ENCODE measurements at regions of chr7 and their contacts with region 1.

Region 1: DNA sequence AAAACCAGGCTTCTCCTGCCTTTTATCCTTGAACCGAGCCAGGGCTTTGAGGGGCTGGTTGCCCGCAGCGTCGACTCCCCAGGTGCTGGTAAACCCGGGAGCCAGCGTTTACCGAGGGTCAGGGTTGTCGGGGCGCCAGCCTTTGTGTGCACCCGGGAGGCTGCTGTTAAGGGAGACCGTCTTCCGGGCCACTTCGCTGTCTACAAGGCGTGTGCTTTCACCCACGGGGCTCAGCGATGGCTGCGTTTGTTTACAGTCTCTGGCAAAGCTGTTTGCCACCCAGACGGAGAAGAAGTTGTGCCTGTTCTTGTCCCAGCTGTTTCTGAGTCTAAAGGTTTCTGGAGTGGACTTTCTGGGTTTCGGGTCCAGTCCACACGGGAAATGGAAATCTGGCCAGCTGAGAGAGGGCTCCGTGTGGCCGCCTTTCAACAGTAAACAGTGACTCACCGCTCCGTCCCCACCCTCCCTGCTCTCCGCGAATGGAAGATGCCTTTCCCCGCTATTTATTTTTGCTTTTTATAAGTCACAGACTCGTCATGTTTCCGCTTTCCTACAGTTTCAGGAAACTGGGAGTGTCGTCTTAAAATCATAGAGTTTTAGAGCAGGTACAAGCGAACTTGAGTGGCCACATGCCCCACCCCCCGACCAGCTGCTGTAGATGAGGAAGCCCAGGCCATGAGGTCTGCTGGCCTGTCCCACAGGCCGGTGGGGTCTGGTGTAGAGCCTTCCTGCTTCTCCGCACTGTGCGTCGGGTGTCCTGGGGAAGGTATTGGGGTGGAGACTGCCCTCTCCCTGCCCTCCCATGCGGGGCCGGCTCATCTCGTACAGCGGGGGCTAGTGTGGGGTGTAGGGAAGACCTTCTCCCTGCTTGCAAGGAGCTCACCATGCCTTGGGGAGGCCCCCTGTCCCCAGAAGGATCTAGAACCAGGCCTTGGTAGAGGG is 2.3 kb downstream of the MAFK start:
- DNase-seq: peak; percentile 95 to 96 (median 96)
- H3K4me3 ChIP-seq: peak overlapping the region; percentile 74 to 81 (median 75)
- H3K4me3 Mint-ChIP-seq: peak overlapping the region; percentile 91 to 96
- H3K27ac ChIP-seq: peak overlapping the region; percentile 97 to 98
- H3K27ac Mint-ChIP-seq: peak overlapping the region; percentile 95 to 99 (median 98)
- H3K4me1 ChIP-seq: peaks cover 32 to 37% of the 10 kb centered on the region in 2 donors
- H3K4me1 Mint-ChIP-seq: peaks cover 28% of the 10 kb centered on the region
- H3K27me3 ChIP-seq: no peaks in the 10 kb centered on the region
- H3K27me3 Mint-ChIP-seq: peaks cover 0 to 4% (median 0%) of the 10 kb centered on the region in 3 donors
- CTCF ChIP-seq: no peak

Region 2: GRCh38 chr7:1503816-1504775 is 28.7 kb before region 1 on chr7 and contains the start of gene INTS1:
- intact Hi-C with region 1: loop called in 1 of 2 experiments (anchors 2 kb)
- DNase-seq: peak; percentile 90 to 91 (median 91)
- H3K4me3 ChIP-seq: peak within 1 kb of the TSS; percentile 64 to 94 (median 83)
- H3K4me3 Mint-ChIP-seq: peak within 1 kb of the TSS; percentile 94
- H3K27ac ChIP-seq: peak within 1 kb of the TSS in 1 of 2 donors; percentile 80
- H3K27ac Mint-ChIP-seq: peak within 1 kb of the TSS in 6 of 7 donors; percentile 45 to 91 (median 82)
- H3K4me1 ChIP-seq: peaks cover 29 to 43% of the 10 kb centered on the region in 2 donors
- H3K4me1 Mint-ChIP-seq: peaks cover 33% of the 10 kb centered on the region
- H3K27me3 ChIP-seq: no peaks in the 10 kb centered on the region
- H3K27me3 Mint-ChIP-seq: peaks cover 2 to 8% (median 3%) of the 10 kb centered on the region in 3 donors
- CTCF ChIP-seq: peak; percentile 92
- polyA plus RNA-seq, gene INTS1: 5.5 to 64.3 (median 7.3) TPM

Region 3: DNA sequence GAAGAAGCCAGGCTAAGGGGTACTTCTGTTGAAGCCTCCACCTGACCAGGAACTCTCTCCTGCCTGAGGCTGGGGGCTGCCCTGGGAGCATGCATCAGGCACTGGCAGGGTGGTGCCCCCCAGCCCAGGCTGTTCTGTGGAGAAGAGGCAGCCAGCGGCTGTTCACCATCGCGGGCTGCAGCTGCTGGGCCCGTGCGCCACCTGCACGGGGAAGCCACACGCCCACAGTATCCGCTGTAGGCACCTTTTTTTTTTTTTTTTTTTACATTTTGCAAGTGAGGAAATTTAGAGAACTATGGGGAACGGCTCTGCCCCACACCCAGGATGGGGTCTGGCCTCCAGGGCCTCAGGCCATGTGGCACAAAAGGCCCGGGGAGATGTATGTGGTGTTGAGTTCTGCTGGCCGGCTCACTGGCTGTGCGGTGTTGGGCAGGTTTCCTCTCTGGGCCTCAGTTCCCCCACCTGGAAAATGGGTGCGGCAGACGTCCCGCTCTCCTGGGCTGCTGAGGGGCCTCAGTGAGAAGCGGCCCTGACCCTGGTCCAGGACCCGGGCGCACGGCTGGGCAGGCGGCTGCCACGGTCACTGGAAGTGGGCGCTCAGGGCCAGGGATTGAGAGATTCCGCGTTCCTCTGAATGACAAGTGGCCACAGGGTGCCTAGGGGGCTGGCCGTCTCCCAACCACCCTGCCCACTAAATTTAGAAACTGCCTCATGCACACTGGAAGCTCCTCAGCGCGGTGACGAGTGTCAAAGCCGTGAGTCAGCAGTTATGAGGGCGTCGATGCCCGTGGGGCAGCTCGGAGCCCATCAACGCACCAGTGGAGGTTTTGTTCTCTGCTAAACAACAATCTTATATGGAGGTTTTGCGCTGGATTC is 19.7 kb before region 1 on chr7:
- intact Hi-C with region 1: loop called in 1 of 2 experiments (anchors 2 kb)
- DNase-seq: peak; percentile 86 to 90 (median 87)
- H3K4me3 ChIP-seq: peak overlapping the region; percentile 2 to 71 (median 27)
- H3K4me3 Mint-ChIP-seq: peak overlapping the region; percentile 73 to 84
- H3K27ac ChIP-seq: peak overlapping the region; percentile 59 to 75
- H3K27ac Mint-ChIP-seq: peak overlapping the region; percentile 76 to 92 (median 88)
- H3K4me1 ChIP-seq: peaks cover 40 to 44% of the 10 kb centered on the region in 2 donors
- H3K4me1 Mint-ChIP-seq: peaks cover 43% of the 10 kb centered on the region
- H3K27me3 ChIP-seq: no peaks in the 10 kb centered on the region
- H3K27me3 Mint-ChIP-seq: peaks cover 2 to 11% (median 5%) of the 10 kb centered on the region in 3 donors
- CTCF ChIP-seq: no peak

Region 4: GRCh38 chr7:2529161-2530070 is 996.7 kb after region 1 on chr7:
- intact Hi-C with region 1: loop called in 1 of 2 experiments (anchors 10 kb)
- DNase-seq: peak; percentile 98 to 99 (median 98)
- H3K4me3 ChIP-seq: peak overlapping the region; percentile 3 to 100 (median 25)
- H3K4me3 Mint-ChIP-seq: peak overlapping the region; percentile 71 to 84
- H3K27ac ChIP-seq: peak overlapping the region; percentile 99 to 100
- H3K27ac Mint-ChIP-seq: peak overlapping the region; percentile 99 to 100 (median 100)
- H3K4me1 ChIP-seq: peaks cover 79 to 80% of the 10 kb centered on the region in 2 donors
- H3K4me1 Mint-ChIP-seq: peaks cover 65% of the 10 kb centered on the region
- H3K27me3 ChIP-seq: no peaks in the 10 kb centered on the region
- H3K27me3 Mint-ChIP-seq: peaks cover 0 to 3% (median 0%) of the 10 kb centered on the region in 3 donors
- CTCF ChIP-seq: no peak